Panc1 (cell line): ENCODE measurements at regions of chr9 and their contacts with region 1.

Region 1: GRCh38 chr9:90914868-90915483 is 113.4 kb downstream of the SYK start:
- DNase-seq: peak; percentile 54
- ATAC-seq: peak; percentile 97
- H3K4me3 ChIP-seq: no peak overlapping the region
- H3K27ac ChIP-seq: no peak overlapping the region
- H3K4me1 ChIP-seq: no peaks in the 10 kb centered on the region
- H3K27me3 ChIP-seq: no peaks in the 10 kb centered on the region
- CTCF ChIP-seq: peak; percentile 83

Region 2: DNA sequence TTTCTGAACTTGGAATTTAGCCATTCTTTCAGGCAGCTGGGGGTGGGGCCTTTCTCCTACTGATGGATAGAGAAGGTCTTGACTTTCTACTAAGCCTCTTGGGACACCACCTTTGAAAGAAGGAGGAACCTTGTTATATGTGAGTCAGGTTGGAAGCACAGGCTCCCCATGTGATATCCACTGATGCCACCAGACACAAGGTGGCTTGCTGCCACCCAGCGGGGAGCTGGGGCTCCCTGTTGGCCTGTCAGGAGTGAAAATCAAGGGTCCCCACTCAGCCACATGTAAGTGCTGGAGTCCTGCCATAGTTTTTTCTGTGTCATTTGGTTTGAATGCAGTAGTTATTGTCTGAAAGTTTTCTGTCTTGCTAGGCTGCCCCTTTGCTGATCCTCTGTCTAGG is 761.1 kb after region 1 on chr9:
- CTCF ChIA-PET with region 1: no interaction called
- POLR2A ChIA-PET with region 1: no interaction called
- in situ Hi-C with region 1: no loop called
- intact Hi-C with region 1: loop called (anchors 5 kb)
- DNase-seq: no peak
- ATAC-seq: peak; percentile 66; the same call in 1 of the 2 replicates
- H3K4me3 ChIP-seq: no peak overlapping the region
- H3K27ac ChIP-seq: no peak overlapping the region
- H3K4me1 ChIP-seq: no peaks in the 10 kb centered on the region
- H3K27me3 ChIP-seq: no peaks in the 10 kb centered on the region
- CTCF ChIP-seq: peak; percentile 63

Region 3: GRCh38 chr9:91727316-91727861 is 812.4 kb after region 1 on chr9:
- CTCF ChIA-PET with region 1: interaction called, 6 read pairs
- POLR2A ChIA-PET with region 1: no interaction called
- in situ Hi-C with region 1: no loop called
- intact Hi-C with region 1: loop called (anchors 2 kb)
- DNase-seq: peak; percentile 12
- ATAC-seq: peak; percentile 89
- H3K4me3 ChIP-seq: no peak overlapping the region
- H3K27ac ChIP-seq: no peak overlapping the region
- H3K4me1 ChIP-seq: no peaks in the 10 kb centered on the region
- H3K27me3 ChIP-seq: no peaks in the 10 kb centered on the region
- CTCF ChIP-seq: peak; percentile 74